ENCODE measurements at regions of chr17 and their contacts with region 1.

Region 1: GRCh38 chr17:82716203-82717010 is at the start of gene FN3KRP:
- DNase-seq: peak; percentile 97
- ATAC-seq: peak; percentile 96
- H3K4me3 ChIP-seq: peak within 1 kb of the TSS; percentile 39 to 81 (median 70)
- H3K4me3 Mint-ChIP-seq: peak within 1 kb of the TSS; percentile 96
- H3K27ac ChIP-seq: peak within 1 kb of the TSS in 1 of 2 donors; percentile 62
- H3K27ac Mint-ChIP-seq: peak within 1 kb of the TSS; percentile 90
- H3K4me1 ChIP-seq: peaks cover 16 to 21% of the 10 kb centered on the region in 2 donors
- H3K4me1 Mint-ChIP-seq: peaks cover 22% of the 10 kb centered on the region
- H3K27me3 ChIP-seq: no peaks in the 10 kb centered on the region
- H3K27me3 Mint-ChIP-seq: no peaks in the 10 kb centered on the region
- CTCF ChIP-seq: no peak
- total RNA-seq, gene FN3KRP: 44.2 and 49.4 TPM in 2 replicates

Region 2: GRCh38 chr17:82457997-82458864 is 258.2 kb before region 1 on chr17 and contains the start of gene NARF:
- CTCF ChIA-PET with region 1: no interaction called
- POLR2A ChIA-PET with region 1: no interaction called
- intact Hi-C with region 1: loop called (anchors 1 kb)
- DNase-seq: peak; percentile 97
- ATAC-seq: peak; percentile 96
- H3K4me3 ChIP-seq: peak within 1 kb of the TSS; percentile 53 to 82 (median 74)
- H3K4me3 Mint-ChIP-seq: peak within 1 kb of the TSS; percentile 81
- H3K27ac ChIP-seq: peak within 1 kb of the TSS; percentile 91 to 99
- H3K27ac Mint-ChIP-seq: peak within 1 kb of the TSS; percentile 90
- H3K4me1 ChIP-seq: peaks cover 13 to 19% of the 10 kb centered on the region in 2 donors
- H3K4me1 Mint-ChIP-seq: peaks cover 19% of the 10 kb centered on the region
- H3K27me3 ChIP-seq: no peaks in the 10 kb centered on the region
- H3K27me3 Mint-ChIP-seq: no peaks in the 10 kb centered on the region
- CTCF ChIP-seq: no peak
- total RNA-seq, gene NARF: 103 and 104 TPM in 2 replicates

Region 3: GRCh38 chr17:82648166-82648668 is 68.2 kb before region 1 on chr17 and contains the start of gene WDR45B:
- CTCF ChIA-PET with region 1: no interaction called
- POLR2A ChIA-PET with region 1: no interaction called
- intact Hi-C with region 1: loop called (anchors 1 kb)
- DNase-seq: peak; percentile 96
- ATAC-seq: peak; percentile 89
- H3K4me3 ChIP-seq: peak within 1 kb of the TSS; percentile 41 to 85 (median 75)
- H3K4me3 Mint-ChIP-seq: peak within 1 kb of the TSS; percentile 92
- H3K27ac ChIP-seq: peak within 1 kb of the TSS; percentile 83 to 89
- H3K27ac Mint-ChIP-seq: peak within 1 kb of the TSS; percentile 97
- H3K4me1 ChIP-seq: peaks cover 15 to 20% of the 10 kb centered on the region in 2 donors
- H3K4me1 Mint-ChIP-seq: peaks cover 23% of the 10 kb centered on the region
- H3K27me3 ChIP-seq: no peaks in the 10 kb centered on the region
- H3K27me3 Mint-ChIP-seq: no peaks in the 10 kb centered on the region
- CTCF ChIP-seq: no peak
- total RNA-seq, gene WDR45B: 63.3 and 72.7 TPM in 2 replicates

Region 4: DNA sequence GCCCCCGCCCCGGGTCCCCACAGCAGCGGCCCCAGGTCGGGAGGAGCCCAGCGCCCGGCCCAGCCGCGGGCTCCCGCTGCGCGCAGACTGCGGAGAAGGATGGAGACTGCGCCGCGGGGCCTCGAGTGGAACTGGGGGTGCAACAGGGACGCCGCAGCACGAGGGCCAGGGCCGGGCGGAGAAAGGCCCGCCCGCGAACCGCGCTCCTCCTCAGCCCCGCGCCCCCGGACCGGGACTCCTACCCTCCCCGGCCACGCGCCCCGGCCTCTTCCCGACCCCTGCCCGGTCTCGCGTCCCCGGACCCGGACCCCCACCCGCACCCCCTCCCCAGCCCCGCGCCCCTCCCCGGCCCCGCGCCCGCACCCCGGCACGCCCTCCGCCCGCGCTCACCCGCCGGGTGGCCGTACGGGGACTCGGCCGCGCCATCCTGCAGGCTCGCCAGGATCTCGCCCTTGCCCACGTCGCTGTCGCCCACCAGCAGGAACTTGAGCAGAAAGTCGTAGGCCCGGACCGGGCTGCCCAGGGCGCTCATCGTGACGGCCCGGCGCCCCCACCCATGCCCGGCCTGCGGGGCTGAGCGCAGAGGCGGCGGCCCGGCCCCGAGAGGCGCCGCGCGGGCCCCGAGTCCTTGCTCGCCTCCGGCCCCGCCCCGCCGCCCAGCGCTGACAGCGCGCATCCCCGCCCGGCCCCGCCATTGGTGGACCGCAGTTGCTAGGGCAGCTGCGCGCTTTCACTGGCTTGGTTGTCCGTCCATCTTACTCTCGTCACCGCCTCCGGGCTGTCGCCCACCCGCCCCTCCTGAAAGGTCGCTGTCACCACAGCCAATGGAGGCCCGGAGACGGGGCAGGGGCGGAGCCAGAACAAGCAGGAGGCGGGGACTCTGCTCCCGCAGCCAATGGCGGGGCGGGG is 18.1 kb before region 1 on chr17 and contains the start of gene RAB40B:
- CTCF ChIA-PET with region 1: no interaction called
- POLR2A ChIA-PET with region 1: interaction called, 4 read pairs
- intact Hi-C with region 1: loop called (anchors 1 kb)
- DNase-seq: peak; percentile 99
- ATAC-seq: peak; percentile 97
- H3K4me3 ChIP-seq: peak within 1 kb of the TSS; percentile 17 to 72 (median 61)
- H3K4me3 Mint-ChIP-seq: peak within 1 kb of the TSS; percentile 96
- H3K27ac ChIP-seq: no peak within 1 kb of the TSS
- H3K27ac Mint-ChIP-seq: peak within 1 kb of the TSS; percentile 64
- H3K4me1 ChIP-seq: peaks cover 8 to 16% of the 10 kb centered on the region in 2 donors
- H3K4me1 Mint-ChIP-seq: peaks cover 10% of the 10 kb centered on the region
- H3K27me3 ChIP-seq: peaks cover 0 to 11% (median 3%) of the 10 kb centered on the region in 4 experiments
- H3K27me3 Mint-ChIP-seq: peaks cover 4% of the 10 kb centered on the region
- CTCF ChIP-seq: no peak
- total RNA-seq, gene RAB40B: 4.7 and 4.9 TPM in 2 replicates

Measured in B cell (primary cell).